Gastrocnemius medialis (tissue), 4 donors: ENCODE measurements at regions of chr16 and their contacts with region 1.

Region 1: GRCh38 chr16:29694384-29695195 is 15.6 kb downstream of the QPRT start:
- DNase-seq: peak in 1 of 2 donors; percentile 59
- ATAC-seq: peak; percentile 74 to 85
- H3K4me3 ChIP-seq: peak overlapping the region; percentile 5 to 41 (median 26)
- H3K27ac ChIP-seq: peak overlapping the region; percentile 48 to 72 (median 61)
- H3K4me1 ChIP-seq: peaks cover 3 to 4% of the 10 kb centered on the region in 2 donors
- H3K27me3 ChIP-seq: no peaks in the 10 kb centered on the region
- CTCF ChIP-seq: no peak
- POLR2A ChIP-seq: no peak

Region 2: GRCh38 chr16:29645694-29646187 is 48.8 kb before region 1 on chr16:
- in situ Hi-C with region 1: no loop called
- intact Hi-C with region 1: no loop called
- DNase-seq: no peak
- ATAC-seq: no peak
- H3K4me3 ChIP-seq: no peak overlapping the region
- H3K27ac ChIP-seq: no peak overlapping the region
- H3K4me1 ChIP-seq: no peaks in the 10 kb centered on the region
- H3K27me3 ChIP-seq: no peaks in the 10 kb centered on the region
- CTCF ChIP-seq: no peak
- POLR2A ChIP-seq: no peak

Region 3: GRCh38 chr16:29848420-29849297 is 154.1 kb after region 1 on chr16:
- in situ Hi-C with region 1: loop called in 2 of 4 experiments (anchors 10 kb)
- intact Hi-C with region 1: no loop called
- DNase-seq: peak; percentile 33 to 50
- ATAC-seq: peak; percentile 50 to 87
- H3K4me3 ChIP-seq: no peak overlapping the region
- H3K27ac ChIP-seq: no peak overlapping the region
- H3K4me1 ChIP-seq: no peaks in the 10 kb centered on the region
- H3K27me3 ChIP-seq: no peaks in the 10 kb centered on the region
- CTCF ChIP-seq: peak; percentile 72 to 93 (median 84)
- POLR2A ChIP-seq: no peak